WTC11 (cell line): ENCODE measurements at regions of chr5 and their contacts with region 1.

Region 1: DNA sequence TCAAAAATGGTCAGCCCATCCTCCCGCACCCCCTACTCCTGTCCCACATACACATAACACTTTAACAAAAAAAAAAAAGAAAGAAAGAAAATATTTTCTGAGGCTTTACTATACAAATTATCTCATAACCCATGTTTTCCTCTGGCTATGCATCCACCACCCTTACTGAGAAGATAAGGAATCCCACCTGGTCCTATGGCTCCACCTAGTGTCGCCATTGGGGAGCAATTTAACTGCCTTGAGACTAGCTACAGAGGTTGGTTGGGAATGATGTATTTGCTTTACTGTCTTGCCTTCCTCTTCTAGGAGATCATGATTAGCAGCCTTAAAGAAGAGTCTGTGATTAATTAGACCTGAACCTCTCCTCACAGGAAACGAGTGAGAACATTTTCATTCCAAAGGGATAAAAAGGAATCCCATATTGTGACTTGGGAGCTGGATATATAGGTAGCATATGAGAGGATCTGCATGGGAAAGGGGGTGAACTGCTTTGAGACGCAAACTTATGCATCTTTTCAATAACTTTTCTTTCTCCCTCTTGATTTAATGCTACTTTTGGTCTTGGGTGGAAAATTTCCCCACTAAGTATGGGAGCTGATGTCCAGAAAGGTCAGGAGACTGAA is 77.7 kb upstream of the SELENOP start:
- DNase-seq: peak; percentile 77
- ATAC-seq: peak; percentile 75
- H3K4me3 Mint-ChIP-seq: no peak overlapping the region
- H3K27ac Mint-ChIP-seq: no peak overlapping the region
- H3K4me1 Mint-ChIP-seq: peaks cover 1% of the 10 kb centered on the region; the same call in 1 of the 2 replicates
- H3K27me3 Mint-ChIP-seq: peaks cover 4% of the 10 kb centered on the region; the same call in 1 of the 2 replicates
- CTCF ChIP-seq: peak; percentile 77

Region 2: GRCh38 chr5:42514754-42515153 is 374.7 kb before region 1 on chr5:
- CTCF ChIA-PET with region 1: interaction called, 16 read pairs
- POLR2A ChIA-PET with region 1: no interaction called
- DNase-seq: no peak
- ATAC-seq: peak; percentile 82
- H3K4me3 Mint-ChIP-seq: no peak overlapping the region
- H3K27ac Mint-ChIP-seq: no peak overlapping the region
- H3K4me1 Mint-ChIP-seq: peaks cover 16% of the 10 kb centered on the region
- H3K27me3 Mint-ChIP-seq: no peaks in the 10 kb centered on the region
- CTCF ChIP-seq: no peak

Region 3: DNA sequence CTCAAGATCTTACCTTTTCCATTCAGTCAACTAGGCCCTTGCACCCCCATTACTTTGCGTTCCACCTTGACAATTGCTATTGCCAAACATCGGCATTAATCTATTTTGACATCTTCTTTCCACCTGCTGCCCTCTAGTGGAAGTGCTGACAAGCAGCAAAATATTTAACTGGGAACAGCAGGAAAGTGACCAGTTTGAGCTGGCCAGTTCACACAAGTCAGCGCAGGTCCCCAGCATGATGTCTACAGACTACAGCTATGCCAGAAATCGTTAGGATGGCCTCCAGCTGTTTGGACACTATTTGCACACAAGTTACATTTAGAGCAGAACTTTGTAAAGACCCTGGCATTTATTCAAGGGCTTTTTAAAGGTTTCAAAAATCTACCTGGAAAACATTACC is 306.1 kb before region 1 on chr5:
- CTCF ChIA-PET with region 1: interaction called, 13 read pairs
- POLR2A ChIA-PET with region 1: no interaction called
- DNase-seq: peak; percentile 58
- ATAC-seq: peak; percentile 88
- H3K4me3 Mint-ChIP-seq: no peak overlapping the region
- H3K27ac Mint-ChIP-seq: no peak overlapping the region
- H3K4me1 Mint-ChIP-seq: peaks cover 4% of the 10 kb centered on the region
- H3K27me3 Mint-ChIP-seq: no peaks in the 10 kb centered on the region
- CTCF ChIP-seq: peak; percentile 61

Region 4: DNA sequence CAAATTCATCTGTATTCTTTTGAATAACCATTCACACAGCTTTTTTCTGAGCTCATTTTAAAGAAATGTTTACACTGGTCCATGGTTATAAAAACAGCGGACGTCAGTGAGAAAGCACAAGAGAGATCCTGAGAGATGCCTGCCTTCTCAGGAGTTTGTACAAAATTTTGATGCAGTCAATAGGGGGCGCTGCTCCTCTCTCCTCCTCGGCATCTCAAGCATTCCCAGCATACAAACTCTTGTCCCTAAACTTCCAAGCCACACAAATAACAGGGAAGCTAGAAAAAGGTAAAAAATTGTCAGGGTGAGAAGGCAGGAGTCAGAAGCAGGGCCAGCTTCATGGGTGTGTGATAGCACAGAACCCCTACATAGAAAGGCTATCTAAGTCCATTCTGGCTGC is 144.0 kb before region 1 on chr5:
- CTCF ChIA-PET with region 1: interaction called, 20 read pairs
- POLR2A ChIA-PET with region 1: no interaction called
- DNase-seq: peak; percentile 67
- ATAC-seq: peak; percentile 91
- H3K4me3 Mint-ChIP-seq: no peak overlapping the region
- H3K27ac Mint-ChIP-seq: peak overlapping the region; percentile 27; the same call in 1 of the 2 replicates
- H3K4me1 Mint-ChIP-seq: peaks cover 2% of the 10 kb centered on the region; the same call in 1 of the 2 replicates
- H3K27me3 Mint-ChIP-seq: no peaks in the 10 kb centered on the region
- CTCF ChIP-seq: peak; percentile 86

Region 5: DNA sequence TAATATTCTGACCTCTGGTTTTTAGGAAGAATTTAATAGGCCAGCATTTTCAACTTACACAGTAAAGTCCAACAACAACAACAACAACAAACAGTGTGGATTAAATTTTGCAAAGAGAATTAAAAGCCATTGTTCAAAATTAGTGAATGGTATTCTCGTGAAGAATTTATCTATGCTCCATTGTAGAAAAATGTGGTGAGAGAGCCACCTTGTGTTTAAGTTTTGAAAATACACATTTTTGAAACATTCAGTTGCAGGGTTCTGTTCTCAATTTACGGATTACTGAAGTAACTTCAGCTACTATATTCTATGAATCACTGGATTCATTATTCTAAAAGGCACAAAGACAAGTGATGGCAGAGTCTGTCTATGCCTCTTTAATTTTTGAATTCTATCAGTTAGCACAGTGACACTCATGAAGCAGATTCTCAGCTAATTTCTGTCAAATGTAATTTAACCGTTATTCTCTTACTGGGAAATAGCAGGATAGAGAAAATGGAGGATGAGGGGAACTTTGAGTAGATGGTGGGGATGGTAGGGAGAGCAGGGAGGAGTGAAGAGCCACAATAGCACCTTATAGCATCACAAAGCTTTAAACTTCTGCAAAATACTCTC is 121.8 kb before region 1 on chr5:
- CTCF ChIA-PET with region 1: interaction called, 12 read pairs
- POLR2A ChIA-PET with region 1: no interaction called
- DNase-seq: no peak
- ATAC-seq: no peak
- H3K4me3 Mint-ChIP-seq: no peak overlapping the region
- H3K27ac Mint-ChIP-seq: no peak overlapping the region
- H3K4me1 Mint-ChIP-seq: no peaks in the 10 kb centered on the region
- H3K27me3 Mint-ChIP-seq: no peaks in the 10 kb centered on the region
- CTCF ChIP-seq: peak; percentile 37